Endothelial cell of umbilical vein (primary cell): ENCODE measurements at regions of chr17 and their contacts with region 1.

Region 1: GRCh38 chr17:28644985-28645939 is at the start of gene BLTP2:
- DNase-seq: peak; percentile 95
- H3K4me3 ChIP-seq: peak within 1 kb of the TSS; percentile 54 to 77 (median 71)
- H3K27ac ChIP-seq: peak within 1 kb of the TSS; percentile 36
- H3K4me1 ChIP-seq: peaks cover 23% of the 10 kb centered on the region
- H3K27me3 ChIP-seq: no peaks in the 10 kb centered on the region
- CTCF ChIP-seq: no peak
- POLR2A ChIP-seq: peak; percentile 93
- total RNA-seq, gene BLTP2: 164 and 165 TPM in 2 replicates

Region 2: DNA sequence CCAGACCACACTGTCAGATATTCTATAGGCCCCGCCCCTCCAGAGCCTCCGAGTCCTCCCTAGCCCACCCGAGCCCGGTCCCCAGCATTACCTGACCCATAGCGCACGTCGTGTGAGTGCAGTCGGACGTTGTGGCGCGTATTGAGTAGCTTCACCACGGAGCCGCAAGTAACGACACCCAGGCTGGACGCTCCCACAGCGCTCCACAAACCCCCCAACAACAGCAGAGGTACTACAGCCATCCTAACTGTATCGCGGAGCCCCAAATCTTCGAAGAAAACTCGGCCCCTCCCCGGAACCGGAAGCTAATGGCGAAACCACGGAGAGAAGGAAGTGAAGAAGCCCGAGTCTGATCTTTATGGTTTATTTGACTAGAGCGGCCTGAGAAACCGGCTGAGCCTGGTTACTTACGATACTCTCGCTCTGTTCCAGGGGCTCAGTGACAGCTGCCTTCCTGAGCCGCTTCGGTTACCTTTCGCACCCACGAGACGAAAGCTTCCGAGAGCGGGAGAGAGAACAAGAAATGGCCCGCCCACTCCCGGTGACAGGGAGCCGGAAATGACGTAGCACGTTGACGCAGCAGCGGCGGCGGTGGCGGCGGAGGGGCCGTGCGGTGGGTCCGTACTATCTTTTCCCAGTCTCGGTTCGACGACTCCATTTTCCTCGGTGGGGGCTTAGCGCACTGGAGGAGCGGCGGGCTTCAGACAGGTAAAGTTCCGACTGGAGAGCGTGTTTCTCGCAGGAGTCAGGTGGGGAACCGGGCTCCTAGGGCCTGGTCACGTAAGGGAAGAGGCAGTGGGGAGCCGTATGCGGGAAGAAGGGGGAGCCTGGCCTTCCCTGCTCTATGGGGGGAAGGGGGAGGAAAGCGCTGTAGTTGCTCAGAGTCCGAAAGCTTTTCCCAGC is 16.6 kb after region 1 on chr17 and contains the starts of genes SDF2 and SUPT6H:
- CTCF ChIA-PET with region 1: interaction called, 49 read pairs
- POLR2A ChIA-PET with region 1: interaction called, 3 read pairs
- dilution Hi-C with region 1: no loop called
- intact Hi-C with region 1: loop called (anchors 2 kb)
- DNase-seq: peak; percentile 92
- H3K4me3 ChIP-seq: peak within 1 kb of the TSS; percentile 75 to 95 (median 82)
- H3K27ac ChIP-seq: peak within 1 kb of the TSS; percentile 79
- H3K4me1 ChIP-seq: peaks cover 8% of the 10 kb centered on the region
- H3K27me3 ChIP-seq: no peaks in the 10 kb centered on the region
- CTCF ChIP-seq: no peak
- POLR2A ChIP-seq: peak; percentile 5
- total RNA-seq, gene SDF2: 52.6 and 56.4 TPM in 2 replicates
- total RNA-seq, gene SUPT6H: 70.4 and 79.2 TPM in 2 replicates

Region 3: DNA sequence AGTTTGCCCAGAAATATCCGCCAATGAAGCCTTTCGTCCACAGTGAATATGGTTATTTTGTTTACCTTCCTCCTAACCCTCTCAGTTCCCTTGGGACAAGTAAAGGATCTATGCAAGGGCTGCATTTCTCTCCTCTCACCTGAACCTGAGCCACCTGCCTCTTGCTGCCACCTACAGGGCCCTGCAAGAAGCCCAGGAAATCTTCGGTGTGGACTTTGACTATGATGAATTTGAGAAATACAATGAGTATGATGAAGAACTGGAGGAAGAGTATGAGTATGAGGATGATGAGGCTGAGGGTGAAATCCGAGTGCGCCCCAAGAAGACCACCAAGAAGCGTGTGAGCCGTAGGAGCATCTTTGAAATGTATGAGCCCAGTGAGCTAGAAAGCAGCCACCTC is 30.7 kb after region 1 on chr17:
- CTCF ChIA-PET with region 1: interaction called, 12 read pairs
- POLR2A ChIA-PET with region 1: no interaction called
- dilution Hi-C with region 1: no loop called
- intact Hi-C with region 1: no loop called
- DNase-seq: no peak
- H3K4me3 ChIP-seq: no peak overlapping the region
- H3K27ac ChIP-seq: no peak overlapping the region
- H3K4me1 ChIP-seq: no peaks in the 10 kb centered on the region
- H3K27me3 ChIP-seq: no peaks in the 10 kb centered on the region
- CTCF ChIP-seq: no peak
- POLR2A ChIP-seq: no peak

Region 4: DNA sequence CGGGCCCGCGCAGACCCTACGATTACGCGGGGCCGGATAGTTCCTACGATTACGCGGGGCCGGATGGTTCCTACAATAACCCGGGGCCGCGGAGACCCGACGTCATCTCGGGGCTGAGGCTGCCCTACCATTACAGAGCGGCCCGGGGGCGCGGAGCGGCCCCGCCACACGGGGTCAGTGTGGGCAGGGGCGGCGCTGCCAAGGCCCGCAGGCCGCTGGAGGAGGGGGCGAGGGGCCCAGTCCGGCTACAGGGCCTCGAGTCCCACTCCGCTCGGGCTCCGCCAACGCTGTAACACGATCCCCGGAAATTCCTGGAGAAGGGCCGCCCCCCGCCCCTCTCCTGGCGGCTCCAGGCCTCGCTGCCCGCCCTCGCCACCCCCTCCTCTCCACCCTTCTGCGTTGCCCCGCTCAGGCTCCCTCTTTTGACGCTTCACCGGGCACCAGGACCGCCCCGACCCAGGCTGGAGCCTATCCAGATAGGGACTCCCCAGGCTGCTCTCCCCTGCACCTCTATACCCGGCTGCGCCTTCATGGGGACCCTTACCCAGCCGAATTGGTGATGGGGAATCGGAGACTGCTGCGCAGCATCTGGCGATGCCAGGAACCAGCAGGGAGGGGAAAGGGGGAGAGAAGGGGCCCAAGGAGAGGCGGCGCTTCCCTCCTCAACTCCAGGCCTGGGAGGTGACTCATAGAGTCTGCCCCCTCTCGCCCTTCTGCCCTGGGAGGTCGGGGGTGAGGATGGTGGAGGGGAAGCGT is 72.5 kb after region 1 on chr17 and contains the start of gene RAB34:
- CTCF ChIA-PET with region 1: interaction called, 10 read pairs
- POLR2A ChIA-PET with region 1: no interaction called
- dilution Hi-C with region 1: no loop called
- intact Hi-C with region 1: loop called (anchors 5 kb)
- DNase-seq: peak; percentile 60
- H3K4me3 ChIP-seq: peak within 1 kb of the TSS; percentile 19 to 60 (median 44)
- H3K27ac ChIP-seq: peak within 1 kb of the TSS; percentile 76
- H3K4me1 ChIP-seq: peaks cover 34% of the 10 kb centered on the region
- H3K27me3 ChIP-seq: no peaks in the 10 kb centered on the region
- CTCF ChIP-seq: peak; percentile 33 to 47
- POLR2A ChIP-seq: peak; percentile 46
- total RNA-seq, gene RAB34: 62.3 and 87.1 TPM in 2 replicates

Region 5: DNA sequence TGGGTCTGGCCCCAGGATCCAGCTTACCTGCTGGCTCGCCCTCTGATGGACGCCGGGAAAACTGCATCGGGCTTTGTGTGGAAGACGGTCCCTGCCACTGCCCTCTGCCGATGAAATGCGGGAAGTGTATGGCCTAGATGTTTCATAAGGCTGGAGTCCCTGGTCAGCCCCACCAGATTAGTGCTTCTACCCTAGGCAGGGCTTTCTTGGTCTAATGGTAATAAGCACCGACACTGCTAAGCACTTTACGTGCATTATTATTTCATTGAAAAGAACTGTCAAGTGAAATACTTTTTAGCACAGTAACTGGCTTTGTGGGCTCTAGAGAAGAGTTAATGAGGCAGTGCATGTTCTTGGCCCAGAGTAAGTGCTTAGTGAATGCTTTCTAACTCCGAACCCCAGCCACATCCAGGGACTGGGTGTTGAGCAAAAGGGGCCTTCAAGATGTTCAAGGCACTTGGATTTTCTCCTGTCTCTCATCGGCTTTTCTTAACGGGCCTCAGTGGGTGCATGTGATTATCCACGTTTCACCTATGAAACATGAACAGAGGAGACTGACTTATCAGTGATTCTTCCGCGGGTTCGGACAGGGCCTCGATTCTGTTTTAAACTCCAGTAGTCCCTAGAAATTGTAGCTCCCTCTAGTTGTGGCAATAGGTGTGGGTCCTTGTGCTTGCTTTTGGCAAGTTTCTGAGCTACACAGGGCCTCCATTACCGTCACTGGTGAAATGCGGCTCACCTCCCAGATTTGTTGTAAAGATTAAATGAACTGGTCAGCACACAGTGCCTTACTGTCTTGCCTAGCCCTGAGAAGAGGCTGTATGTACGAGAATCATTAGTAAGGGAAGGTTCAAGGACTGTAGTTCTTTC is 105.2 kb after region 1 on chr17:
- CTCF ChIA-PET with region 1: interaction called, 20 read pairs
- POLR2A ChIA-PET with region 1: interaction called, 7 read pairs
- dilution Hi-C with region 1: no loop called
- intact Hi-C with region 1: loop called (anchors 1 kb)
- DNase-seq: peak; percentile 91
- H3K4me3 ChIP-seq: no peak overlapping the region
- H3K27ac ChIP-seq: no peak overlapping the region
- H3K4me1 ChIP-seq: peaks cover 22% of the 10 kb centered on the region
- H3K27me3 ChIP-seq: no peaks in the 10 kb centered on the region
- CTCF ChIP-seq: peak; percentile 99 to 100
- POLR2A ChIP-seq: no peak